ENCODE measurements at regions of chr4 and their contacts with region 1.

Region 1: GRCh38 chr4:85747882-85748491 is 273.0 kb downstream of the ARHGAP24 start:
- H3K4me3 Mint-ChIP-seq: no peak overlapping the region
- H3K27ac Mint-ChIP-seq: no peak overlapping the region
- H3K4me1 Mint-ChIP-seq: peaks cover 25% of the 10 kb centered on the region
- H3K27me3 Mint-ChIP-seq: no peaks in the 10 kb centered on the region

Region 2: DNA sequence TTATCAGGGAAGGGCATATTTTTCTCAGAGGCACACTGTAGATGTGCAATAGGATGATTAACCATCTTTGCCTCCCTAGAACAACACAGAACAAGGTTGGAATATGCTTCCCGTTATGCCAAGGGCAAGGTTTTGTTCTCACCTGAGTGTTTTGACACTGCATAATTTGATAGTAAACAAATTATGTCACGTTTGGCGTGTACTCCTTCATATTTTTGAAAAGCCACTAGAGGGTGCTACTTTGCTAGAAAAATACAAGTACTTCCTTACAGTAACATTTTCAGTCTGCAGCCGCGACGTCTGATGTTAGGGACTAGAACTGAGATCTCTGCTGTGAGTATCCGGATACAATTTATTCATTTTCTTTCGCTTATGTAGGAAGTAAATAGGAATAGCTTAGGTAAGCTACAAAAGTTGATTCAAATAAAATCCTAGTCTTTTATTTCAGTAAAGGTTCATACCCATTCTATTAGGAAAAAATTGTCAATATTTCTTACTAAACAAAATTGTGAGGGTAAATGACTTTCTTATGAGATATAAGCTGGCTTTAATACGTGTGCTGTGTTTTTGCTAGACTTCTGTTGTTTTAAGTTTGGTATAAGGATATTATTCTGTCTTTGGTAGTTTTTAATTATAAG is 600.4 kb before region 1 on chr4:
- intact Hi-C with region 1: loop called (anchors 5 kb)
- H3K4me3 Mint-ChIP-seq: no peak overlapping the region
- H3K27ac Mint-ChIP-seq: no peak overlapping the region
- H3K4me1 Mint-ChIP-seq: no peaks in the 10 kb centered on the region
- H3K27me3 Mint-ChIP-seq: peaks cover 10% of the 10 kb centered on the region

Region 3: DNA sequence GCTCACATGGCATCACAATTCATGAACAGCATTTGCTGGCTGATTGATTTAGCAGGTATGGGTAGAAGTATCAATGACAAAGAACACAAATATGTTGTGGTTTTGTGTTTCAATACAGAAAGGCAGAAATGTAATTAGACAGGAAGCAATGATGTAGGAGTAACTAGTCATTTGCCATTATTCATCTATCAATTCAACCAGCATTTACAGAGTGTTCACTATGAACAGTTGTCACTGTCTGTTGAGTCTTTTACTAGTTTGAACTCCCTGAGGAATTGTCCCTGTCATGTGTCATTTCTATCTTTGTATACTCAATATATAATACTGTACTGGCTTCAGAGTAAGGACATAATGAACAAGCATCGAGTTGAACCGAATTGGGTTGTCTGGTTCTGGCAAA is 324.6 kb before region 1 on chr4:
- intact Hi-C with region 1: loop called (anchors 1 kb)
- H3K4me3 Mint-ChIP-seq: no peak overlapping the region
- H3K27ac Mint-ChIP-seq: no peak overlapping the region
- H3K4me1 Mint-ChIP-seq: no peaks in the 10 kb centered on the region
- H3K27me3 Mint-ChIP-seq: peaks cover 2% of the 10 kb centered on the region

Region 4: GRCh38 chr4:85498068-85498733 is 249.8 kb before region 1 on chr4:
- intact Hi-C with region 1: loop called (anchors 10 kb)
- H3K4me3 Mint-ChIP-seq: no peak overlapping the region
- H3K27ac Mint-ChIP-seq: peak overlapping the region; percentile 66
- H3K4me1 Mint-ChIP-seq: peaks cover 14% of the 10 kb centered on the region
- H3K27me3 Mint-ChIP-seq: no peaks in the 10 kb centered on the region

Region 5: DNA sequence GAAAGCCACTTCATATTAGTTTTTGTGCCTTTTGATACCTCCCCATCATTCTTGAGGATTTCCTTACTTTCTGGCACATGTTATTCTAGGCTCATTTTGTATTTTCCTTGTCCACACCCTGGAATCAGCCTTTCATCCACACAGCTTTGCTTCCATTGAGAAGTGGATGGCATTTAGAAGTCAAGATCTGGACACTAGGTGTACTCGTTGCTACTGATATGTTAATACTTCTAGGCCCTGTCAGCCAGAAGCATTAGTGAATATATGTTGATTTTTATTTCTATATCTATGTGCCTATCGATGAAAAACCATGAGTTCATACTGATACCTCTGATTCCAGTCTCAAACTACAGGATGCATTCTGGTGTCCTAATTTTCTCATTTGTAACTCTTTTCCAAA is 199.9 kb before region 1 on chr4:
- intact Hi-C with region 1: loop called (anchors 5 kb)
- H3K4me3 Mint-ChIP-seq: no peak overlapping the region
- H3K27ac Mint-ChIP-seq: no peak overlapping the region
- H3K4me1 Mint-ChIP-seq: no peaks in the 10 kb centered on the region
- H3K27me3 Mint-ChIP-seq: no peaks in the 10 kb centered on the region

Region 6: GRCh38 chr4:85681221-85681657 is 66.7 kb before region 1 on chr4:
- intact Hi-C with region 1: loop called (anchors 5 kb)
- H3K4me3 Mint-ChIP-seq: no peak overlapping the region
- H3K27ac Mint-ChIP-seq: peak overlapping the region; percentile 70
- H3K4me1 Mint-ChIP-seq: peaks cover 26% of the 10 kb centered on the region
- H3K27me3 Mint-ChIP-seq: no peaks in the 10 kb centered on the region